AG04450 (cell line): ENCODE measurements at regions of chr12 and their contacts with region 1.

Region 1: GRCh38 chr12:6540181-6540877 is 6.0 kb downstream of the GAPDH start:
- DNase-seq: peak; percentile 75
- H3K4me3 ChIP-seq: 0 out of 2 replicates have a peak overlapping the region, but pooled peaks have one; percentile 7
- H3K27ac ChIP-seq: peak overlapping the region; percentile 83
- H3K27me3 ChIP-seq: no peaks in the 10 kb centered on the region
- CTCF ChIP-seq: no peak

Region 2: DNA sequence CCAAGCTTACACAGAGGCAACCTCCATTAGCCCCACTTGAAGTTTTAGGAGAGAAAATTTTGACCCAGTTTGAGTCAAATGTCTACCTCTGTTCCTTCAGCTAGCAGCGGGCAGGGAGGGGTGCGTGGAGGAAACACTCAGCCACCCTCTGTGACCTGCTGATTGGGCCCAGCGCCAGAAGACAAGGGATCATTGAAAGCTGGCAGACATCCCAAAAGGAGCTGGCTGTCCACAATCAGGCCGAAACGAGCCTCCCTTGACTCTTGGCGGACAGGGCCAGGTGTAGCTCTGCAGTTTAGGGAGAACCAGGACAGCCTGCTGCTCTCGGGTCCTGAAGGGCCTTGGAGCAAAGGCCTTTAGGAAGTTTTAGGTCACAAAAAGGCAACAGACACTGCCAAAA is 298.8 kb before region 1 on chr12:
- CTCF ChIA-PET with region 1: no interaction called
- POLR2A ChIA-PET with region 1: no interaction called
- DNase-seq: no peak
- H3K4me3 ChIP-seq: no peak overlapping the region
- H3K27ac ChIP-seq: no peak overlapping the region
- H3K27me3 ChIP-seq: peaks cover 4% of the 10 kb centered on the region
- CTCF ChIP-seq: no peak

Region 3: GRCh38 chr12:6423267-6424007 is 116.9 kb before region 1 on chr12:
- CTCF ChIA-PET with region 1: interaction called, 26 read pairs
- POLR2A ChIA-PET with region 1: interaction called, 8 read pairs
- DNase-seq: peak; percentile 83
- H3K4me3 ChIP-seq: no peak overlapping the region
- H3K27ac ChIP-seq: no peak overlapping the region
- H3K27me3 ChIP-seq: no peaks in the 10 kb centered on the region
- CTCF ChIP-seq: peak; percentile 87

Region 4: DNA sequence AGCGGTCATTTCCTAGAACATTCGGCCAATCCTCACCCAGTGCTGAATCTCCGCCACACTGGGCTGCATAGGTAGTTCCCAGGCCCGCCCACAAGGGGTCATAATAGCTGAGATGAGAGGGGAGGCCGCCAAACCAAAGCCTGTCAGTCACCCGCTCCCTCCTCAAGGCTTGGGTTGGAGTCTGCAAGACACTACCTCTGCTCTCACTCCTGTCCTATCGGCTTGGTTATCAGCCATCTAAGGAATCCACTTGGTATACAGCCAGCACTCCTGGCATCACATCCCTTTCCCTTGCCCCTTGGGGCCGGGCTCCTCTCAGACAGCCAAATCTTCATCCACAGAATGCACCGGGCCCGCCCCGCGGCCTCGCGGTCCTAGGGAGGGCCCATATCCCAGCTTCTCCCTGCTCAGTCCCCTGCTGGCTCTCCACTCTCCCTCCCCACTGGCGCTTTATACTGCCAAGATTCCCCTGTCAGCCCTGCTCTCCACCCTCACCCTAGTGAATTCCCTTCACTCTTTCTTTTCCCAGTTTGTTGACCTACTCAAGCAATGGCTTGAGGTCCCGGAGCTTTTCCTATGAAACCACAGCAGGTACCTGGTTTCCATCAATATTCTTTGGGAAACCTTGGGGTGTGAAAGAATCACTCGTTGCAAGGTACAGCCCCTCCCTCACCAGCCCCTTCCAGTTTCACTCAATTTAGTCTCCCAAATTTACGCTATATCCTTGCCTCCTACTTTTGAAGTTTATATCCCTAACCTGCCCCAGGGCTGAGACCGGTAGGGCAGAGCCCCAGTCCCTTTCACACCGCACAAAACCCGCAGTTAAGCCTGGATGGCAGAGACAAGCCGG is 14.1 kb after region 1 on chr12:
- CTCF ChIA-PET with region 1: interaction called, 103 read pairs
- POLR2A ChIA-PET with region 1: interaction called, 218 read pairs
- DNase-seq: no peak
- H3K4me3 ChIP-seq: peak overlapping the region; percentile 84
- H3K27ac ChIP-seq: peak overlapping the region; percentile 39
- H3K27me3 ChIP-seq: no peaks in the 10 kb centered on the region
- CTCF ChIP-seq: peak; percentile 65

Region 5: DNA sequence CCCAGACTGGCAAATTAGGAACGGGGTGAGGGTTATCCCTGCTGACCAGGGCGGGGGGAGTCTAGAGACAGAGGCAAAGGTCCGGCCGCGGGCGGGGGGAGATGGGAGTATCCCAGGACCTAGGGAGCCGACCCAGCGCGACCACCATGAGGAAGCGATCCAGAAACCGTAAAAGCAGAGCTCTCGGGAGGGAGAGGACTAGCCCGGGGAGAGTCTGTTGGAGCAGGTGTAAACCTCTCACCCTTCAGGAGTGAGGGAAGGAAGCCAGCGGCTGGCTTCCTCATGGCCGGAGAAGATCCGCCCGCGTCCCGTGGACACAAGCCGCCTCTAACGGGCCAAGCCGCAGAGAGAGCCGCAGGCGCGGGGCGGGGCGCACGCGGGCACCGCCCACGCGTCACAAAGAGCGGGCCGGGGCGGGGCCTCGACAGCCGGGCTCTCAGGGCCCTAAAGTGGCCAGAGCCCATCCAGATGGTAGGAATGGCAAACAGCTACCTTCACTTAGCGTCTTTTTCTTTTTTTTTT is 106.8 kb after region 1 on chr12 and contains the start of gene ACRBP:
- CTCF ChIA-PET with region 1: no interaction called
- POLR2A ChIA-PET with region 1: no interaction called
- DNase-seq: no peak
- H3K4me3 ChIP-seq: peak within 1 kb of the TSS; percentile 55
- H3K27ac ChIP-seq: no peak within 1 kb of the TSS
- H3K27me3 ChIP-seq: peaks cover 5% of the 10 kb centered on the region
- CTCF ChIP-seq: no peak
- polyA plus RNA-seq, gene ACRBP: 0.41 and 0.64 TPM in 2 replicates